Thyroid gland (tissue), 4 donors: ENCODE measurements at regions of chr4 and their contacts with region 1.

Region 1: DNA sequence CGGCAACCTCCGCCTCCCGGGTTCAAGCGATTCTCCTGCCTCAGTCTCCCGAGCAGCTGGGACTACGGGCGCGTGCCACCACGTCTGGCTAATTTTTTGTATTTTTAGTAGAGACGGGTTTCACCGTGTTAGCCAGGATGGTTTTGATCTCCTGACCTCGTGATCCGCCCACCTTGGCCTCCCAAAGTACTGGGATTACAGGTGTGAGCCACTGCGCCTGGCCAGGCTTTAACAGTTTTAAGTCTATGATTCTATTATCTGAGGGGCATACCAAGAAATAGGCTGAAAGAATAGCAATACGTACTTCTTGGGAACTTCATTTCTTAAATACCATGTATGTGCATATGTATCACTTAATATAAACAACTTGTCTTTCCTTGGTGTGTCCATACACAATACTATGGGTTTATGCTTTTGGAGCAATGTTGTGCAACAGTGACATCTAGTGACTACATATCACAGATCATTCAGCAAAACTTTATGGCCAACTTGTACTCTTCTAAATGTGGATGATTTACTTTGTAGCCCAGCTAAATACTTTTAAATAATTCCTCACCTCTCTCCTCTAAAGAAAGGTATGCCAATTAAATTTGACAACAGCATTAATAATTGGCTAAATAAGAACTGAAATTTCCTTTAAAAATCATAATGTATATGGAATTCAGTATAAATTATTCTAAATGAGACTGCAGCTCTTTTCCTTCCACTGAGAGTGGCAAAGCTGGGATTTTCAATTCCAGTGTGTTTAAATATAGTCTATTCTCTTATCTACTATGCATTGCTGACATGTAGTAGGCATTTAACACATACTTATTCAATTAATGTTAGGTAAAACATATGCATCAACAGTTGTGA is 10.4 kb downstream of the SLC9B1 start:
- DNase-seq: no peak
- H3K4me3 ChIP-seq: no peak overlapping the region
- H3K27ac ChIP-seq: no peak overlapping the region
- H3K4me1 ChIP-seq: peaks cover 15 to 26% of the 10 kb centered on the region in 2 donors
- H3K27me3 ChIP-seq: no peaks in the 10 kb centered on the region
- CTCF ChIP-seq: peak in 5 of 6 experiments; percentile 32 to 88 (median 69)
- POLR2A ChIP-seq: no peak

Region 2: GRCh38 chr4:102449751-102450352 is 559.2 kb before region 1 on chr4:
- intact Hi-C with region 1: loop called (anchors 10 kb)
- DNase-seq: peak; percentile 33 to 47
- H3K4me3 ChIP-seq: no peak overlapping the region
- H3K27ac ChIP-seq: no peak overlapping the region
- H3K4me1 ChIP-seq: no peaks in the 10 kb centered on the region
- H3K27me3 ChIP-seq: no peaks in the 10 kb centered on the region
- CTCF ChIP-seq: peak; percentile 23 to 72 (median 60)
- POLR2A ChIP-seq: no peak

Region 3: GRCh38 chr4:102620697-102621497 is 388.2 kb before region 1 on chr4:
- intact Hi-C with region 1: loop called (anchors 5 kb)
- DNase-seq: peak; percentile 48 to 53
- H3K4me3 ChIP-seq: no peak overlapping the region
- H3K27ac ChIP-seq: peak overlapping the region; percentile 19 to 42 (median 33)
- H3K4me1 ChIP-seq: no peaks in the 10 kb centered on the region
- H3K27me3 ChIP-seq: no peaks in the 10 kb centered on the region
- CTCF ChIP-seq: peak; percentile 45 to 86 (median 66)
- POLR2A ChIP-seq: no peak